ENCODE measurements at regions of chr10 and their contacts with region 1.

Region 1: DNA sequence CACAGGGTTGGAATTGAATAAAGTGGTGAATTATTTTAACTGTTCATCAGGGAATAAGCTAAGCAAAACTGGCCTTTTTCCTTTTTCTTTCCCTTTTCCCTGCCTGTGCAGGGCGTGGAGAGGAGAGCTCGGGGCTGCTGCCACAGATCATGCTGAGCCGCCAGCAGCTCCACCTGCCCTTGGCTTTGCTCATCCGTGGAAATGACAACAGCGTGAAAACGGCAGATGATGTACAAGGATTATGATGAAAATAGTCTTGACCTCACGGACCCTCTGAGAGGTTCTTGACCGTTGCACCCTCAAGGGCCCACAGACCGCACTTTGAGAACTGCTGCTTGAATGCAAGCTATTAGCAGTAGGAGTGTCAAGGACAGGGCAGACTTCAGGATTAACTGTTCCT is 10.6 kb downstream of the PPP2R2D start:
- DNase-seq: no peak
- ATAC-seq: no peak
- H3K4me3 ChIP-seq: no peak overlapping the region
- H3K4me3 Mint-ChIP-seq: no peak overlapping the region
- H3K27ac ChIP-seq: no peak overlapping the region
- H3K27ac Mint-ChIP-seq: no peak overlapping the region
- H3K4me1 ChIP-seq: peaks cover 61% of the 10 kb centered on the region
- H3K4me1 Mint-ChIP-seq: peaks cover 78% of the 10 kb centered on the region
- H3K27me3 ChIP-seq: no peaks in the 10 kb centered on the region
- H3K27me3 Mint-ChIP-seq: no peaks in the 10 kb centered on the region
- CTCF ChIP-seq: no peak

Region 2: DNA sequence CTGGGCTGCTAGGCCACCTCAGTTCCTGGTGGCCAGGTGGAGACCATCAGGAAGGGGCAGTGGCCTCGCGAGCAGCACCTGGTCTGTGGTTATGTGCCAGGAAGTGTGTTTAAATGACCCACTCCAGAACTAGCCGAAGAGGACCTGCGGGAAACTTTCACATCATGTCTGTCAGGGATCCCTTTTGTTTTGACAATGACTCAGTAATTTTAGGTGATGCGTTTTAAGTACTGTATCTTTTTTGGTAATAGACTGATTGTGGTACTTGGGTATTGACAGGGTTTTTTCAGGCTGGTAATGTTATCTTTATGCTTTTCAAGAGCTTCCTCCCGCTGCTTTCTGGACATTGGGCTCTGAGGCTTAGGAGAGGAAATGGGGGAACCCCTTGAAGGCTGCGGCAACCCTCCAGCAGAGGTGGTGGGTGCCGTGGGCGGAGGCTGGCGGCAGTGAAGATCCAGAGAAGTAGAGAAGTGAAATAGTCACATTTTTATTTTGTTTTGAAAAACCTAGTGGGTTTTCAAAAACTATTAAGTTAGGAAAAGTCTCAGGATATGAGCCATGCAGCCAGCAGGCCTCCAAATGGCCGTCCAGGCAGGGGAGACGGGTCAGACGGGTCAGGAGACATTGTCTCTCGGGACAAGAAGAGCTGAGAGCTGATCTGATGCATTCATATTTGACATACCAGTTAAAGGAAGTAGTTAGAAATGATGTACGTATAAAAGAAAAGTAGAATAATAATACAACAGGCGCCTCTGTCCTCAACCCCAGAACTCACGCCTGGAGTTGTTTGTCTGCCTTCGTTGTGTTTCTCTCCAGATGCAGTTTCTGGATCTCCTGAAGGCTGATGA is 17.0 kb after region 1 on chr10:
- CTCF ChIA-PET with region 1: no interaction called
- POLR2A ChIA-PET with region 1: interaction called, 3 read pairs
- intact Hi-C with region 1: loop called in 1 of 2 experiments (anchors 2 kb)
- DNase-seq: peak in 7 of 9 experiments; percentile 21 to 65 (median 45)
- ATAC-seq: peak; percentile 73
- H3K4me3 ChIP-seq: peak overlapping the region in 1 of 2 experiments; percentile 9
- H3K4me3 Mint-ChIP-seq: peak overlapping the region; percentile 71
- H3K27ac ChIP-seq: peak overlapping the region in 1 of 2 experiments; percentile 12
- H3K27ac Mint-ChIP-seq: peak overlapping the region; percentile 84
- H3K4me1 ChIP-seq: peaks cover 36% of the 10 kb centered on the region
- H3K4me1 Mint-ChIP-seq: peaks cover 80% of the 10 kb centered on the region
- H3K27me3 ChIP-seq: no peaks in the 10 kb centered on the region
- H3K27me3 Mint-ChIP-seq: no peaks in the 10 kb centered on the region
- CTCF ChIP-seq: no peak

Region 3: DNA sequence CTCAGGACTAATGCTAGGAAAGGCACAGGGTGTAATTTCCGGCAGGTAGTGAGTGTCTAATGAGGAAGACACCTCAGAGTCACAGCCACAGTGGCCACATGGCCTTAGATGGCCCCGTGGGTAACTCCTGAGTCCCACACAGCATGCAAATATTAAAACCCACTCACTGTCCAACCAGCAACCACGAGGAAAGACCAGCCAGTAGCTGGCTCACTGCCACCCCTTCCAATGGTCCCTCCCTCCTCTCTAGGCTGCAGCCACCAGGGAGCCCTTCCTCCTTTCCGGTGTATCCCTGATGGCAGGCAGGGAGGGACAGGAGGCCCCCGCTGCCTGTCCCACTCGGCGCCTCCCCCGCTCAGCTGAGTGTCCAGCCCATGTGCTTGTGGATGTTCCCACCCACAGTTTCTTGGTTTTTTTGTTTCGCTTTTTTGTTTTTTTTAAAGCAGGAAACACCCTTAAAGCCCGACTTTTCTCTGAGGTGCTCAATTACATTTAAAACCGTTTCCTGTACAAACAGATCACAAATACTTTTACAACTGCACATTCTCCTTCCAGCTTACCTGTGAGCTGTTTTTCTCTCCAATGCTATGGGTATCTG is 61.1 kb after region 1 on chr10:
- CTCF ChIA-PET with region 1: interaction called, 3 read pairs
- POLR2A ChIA-PET with region 1: interaction called, 11 read pairs
- intact Hi-C with region 1: no loop called
- DNase-seq: peak in 6 of 9 experiments; percentile 15 to 72 (median 50)
- ATAC-seq: peak; percentile 62
- H3K4me3 ChIP-seq: peak overlapping the region; percentile 38 to 52
- H3K4me3 Mint-ChIP-seq: peak overlapping the region; percentile 79
- H3K27ac ChIP-seq: peak overlapping the region; percentile 34 to 68
- H3K27ac Mint-ChIP-seq: peak overlapping the region; percentile 94
- H3K4me1 ChIP-seq: peaks cover 67% of the 10 kb centered on the region
- H3K4me1 Mint-ChIP-seq: peaks cover 69% of the 10 kb centered on the region
- H3K27me3 ChIP-seq: no peaks in the 10 kb centered on the region
- H3K27me3 Mint-ChIP-seq: no peaks in the 10 kb centered on the region
- CTCF ChIP-seq: no peak